ENCODE measurements at regions of chr2 and their contacts with region 1.

Region 1: DNA sequence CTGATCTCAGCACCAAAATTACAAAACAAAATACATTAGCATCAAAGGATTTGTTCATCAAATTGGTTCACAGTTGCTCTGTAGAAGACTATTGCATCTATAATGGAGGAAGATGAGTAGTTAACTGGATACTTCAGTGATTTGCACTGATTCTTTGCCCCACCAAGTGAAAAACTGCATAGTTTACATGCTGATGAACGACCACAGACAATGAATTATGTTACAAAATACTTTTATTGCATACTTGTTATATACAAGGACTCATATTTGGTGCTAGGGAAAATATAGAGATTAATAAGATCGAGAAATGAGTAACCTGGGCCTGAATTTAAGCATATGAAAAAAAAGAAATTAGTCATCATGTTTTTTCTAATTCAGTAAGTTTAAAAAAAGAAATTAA is 107.2 kb downstream of the SCG2 start:
- DNase-seq: no peak
- ATAC-seq: no peak
- H3K4me3 ChIP-seq: no peak overlapping the region
- H3K27ac ChIP-seq: no peak overlapping the region
- H3K4me1 ChIP-seq: no peaks in the 10 kb centered on the region
- H3K27me3 ChIP-seq: no peaks in the 10 kb centered on the region
- CTCF ChIP-seq: no peak

Region 2: GRCh38 chr2:223549215-223549614 is 54.2 kb after region 1 on chr2:
- CTCF ChIA-PET with region 1: no interaction called
- POLR2A ChIA-PET with region 1: no interaction called
- intact Hi-C with region 1: loop called (anchors 5 kb)
- DNase-seq: peak; percentile 98
- ATAC-seq: peak; percentile 80
- H3K4me3 ChIP-seq: peak overlapping the region; percentile 30; the same call in 1 of the 2 replicates
- H3K27ac ChIP-seq: peak overlapping the region; percentile 90
- H3K4me1 ChIP-seq: peaks cover 54% of the 10 kb centered on the region
- H3K27me3 ChIP-seq: no peaks in the 10 kb centered on the region
- CTCF ChIP-seq: no peak

Region 3: DNA sequence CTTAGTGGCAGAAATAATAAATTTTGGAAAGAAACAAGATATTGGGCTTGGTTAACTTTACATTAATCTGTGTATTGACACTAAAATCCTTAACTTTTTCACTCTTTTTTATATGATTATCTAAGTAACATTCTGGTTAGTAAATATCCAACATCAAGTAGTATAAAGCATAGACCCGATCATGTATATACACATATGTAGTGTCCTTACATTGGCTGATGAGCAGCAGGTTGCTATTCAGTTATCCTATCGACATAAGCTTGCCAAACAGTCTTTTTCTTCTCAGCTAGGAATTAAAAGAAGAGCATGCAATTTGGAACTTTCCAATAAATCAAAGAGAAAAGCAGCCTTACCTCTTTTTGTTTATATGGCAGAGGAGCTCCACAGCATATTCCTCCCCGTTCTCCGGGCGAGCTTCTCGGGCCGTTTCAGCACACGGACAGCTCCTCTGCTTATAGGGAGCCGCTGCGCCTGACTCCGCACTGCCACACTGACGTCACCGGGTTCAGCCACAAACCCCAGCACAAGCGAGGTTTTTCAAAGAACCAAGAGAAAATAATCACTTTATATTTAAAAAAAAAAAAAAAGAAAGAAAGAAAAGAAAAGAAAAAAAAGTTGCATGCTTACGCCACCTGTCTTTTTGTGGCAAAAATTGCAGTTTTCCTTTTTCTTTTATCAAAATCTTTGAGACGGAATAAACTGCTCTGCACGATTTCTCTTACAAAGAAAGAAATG is 107.1 kb after region 1 on chr2 and contains the start of gene SCG2:
- CTCF ChIA-PET with region 1: no interaction called
- POLR2A ChIA-PET with region 1: no interaction called
- intact Hi-C with region 1: no loop called
- DNase-seq: peak; percentile 74
- ATAC-seq: peak; percentile 98
- H3K4me3 ChIP-seq: no peak within 1 kb of the TSS
- H3K27ac ChIP-seq: no peak within 1 kb of the TSS
- H3K4me1 ChIP-seq: peaks cover 14% of the 10 kb centered on the region
- H3K27me3 ChIP-seq: no peaks in the 10 kb centered on the region
- CTCF ChIP-seq: peak; percentile 33
- total RNA-seq, gene SCG2: 0.51 and 0.98 TPM in 2 replicates